ENCODE measurements at regions of chr21 and their contacts with region 1.

Region 1: GRCh38 chr21:34888569-34889319 is 160.4 kb downstream of the RUNX1 start:
- DNase-seq: no peak
- ATAC-seq: peak; percentile 68
- H3K4me3 ChIP-seq: peak overlapping the region; percentile 72
- H3K27ac ChIP-seq: peak overlapping the region; percentile 68
- H3K4me1 ChIP-seq: peaks cover 5% of the 10 kb centered on the region
- H3K27me3 ChIP-seq: peaks cover 3 to 9% of the 10 kb centered on the region in 2 experiments
- CTCF ChIP-seq: no peak
- EP300 ChIP-seq: no peak
- POLR2A ChIP-seq: peak; percentile 69
- RAD21 ChIP-seq: no peak

Region 2: DNA sequence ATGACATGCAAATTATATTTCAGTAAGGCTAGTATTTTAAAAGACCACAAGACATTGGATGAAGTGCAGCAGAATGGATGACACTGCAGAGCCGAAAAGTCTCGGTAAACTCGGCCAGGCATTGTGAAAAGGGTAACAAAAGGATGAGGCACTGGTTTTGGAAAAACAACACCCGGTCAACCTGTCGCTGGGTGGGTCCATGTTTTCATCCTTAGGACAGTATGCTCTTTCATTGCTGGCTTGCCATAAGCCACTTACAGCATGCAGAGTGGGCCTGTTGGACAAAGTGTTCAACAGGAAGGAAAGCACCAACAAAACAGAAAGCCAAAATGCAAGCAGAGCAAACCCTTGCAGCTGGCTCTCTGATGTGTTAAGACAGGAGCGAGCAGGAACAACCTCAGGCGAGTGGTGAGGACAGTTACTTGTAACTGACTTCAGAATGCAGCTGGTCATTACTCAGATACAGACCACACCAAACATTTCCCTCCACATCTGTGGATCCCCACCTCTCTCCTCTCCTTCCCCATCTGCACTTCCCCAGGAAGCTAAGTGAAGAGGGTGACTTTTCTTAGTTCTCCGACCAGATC is 270.9 kb before region 1 on chr21:
- CTCF ChIA-PET with region 1: no interaction called
- POLR2A ChIA-PET with region 1: no interaction called
- RAD21 ChIA-PET with region 1: no interaction called
- SMC1A ChIA-PET with region 1: no interaction called
- in situ Hi-C with region 1: no loop called
- intact Hi-C with region 1: no loop called
- DNase-seq: no peak
- ATAC-seq: no peak
- H3K4me3 ChIP-seq: no peak overlapping the region
- H3K27ac ChIP-seq: no peak overlapping the region
- H3K4me1 ChIP-seq: peaks cover under 1% of the 10 kb centered on the region; the same call in 1 of the 2 replicates
- H3K27me3 ChIP-seq: no peaks in the 10 kb centered on the region
- CTCF ChIP-seq: no peak
- EP300 ChIP-seq: no peak
- POLR2A ChIP-seq: no peak
- RAD21 ChIP-seq: no peak

Region 3: GRCh38 chr21:34745557-34746255 is 143.0 kb before region 1 on chr21:
- CTCF ChIA-PET with region 1: interaction called, 17 read pairs
- POLR2A ChIA-PET with region 1: no interaction called
- RAD21 ChIA-PET with region 1: interaction called, 28 read pairs
- SMC1A ChIA-PET with region 1: interaction called, 6 read pairs
- in situ Hi-C with region 1: no loop called
- intact Hi-C with region 1: loop called (anchors 2 kb)
- DNase-seq: peak; percentile 26
- ATAC-seq: peak; percentile 95
- H3K4me3 ChIP-seq: peak overlapping the region; percentile 38; the same call in 1 of the 2 replicates
- H3K27ac ChIP-seq: 0 out of 2 replicates have a peak overlapping the region, but pooled peaks have one; percentile 18
- H3K4me1 ChIP-seq: peaks cover 8% of the 10 kb centered on the region
- H3K27me3 ChIP-seq: no peaks in the 10 kb centered on the region; a peak in 2 of 4 replicates
- CTCF ChIP-seq: peak; percentile 81 to 91 (median 85)
- EP300 ChIP-seq: no peak
- POLR2A ChIP-seq: no peak
- RAD21 ChIP-seq: peak; percentile 92

Region 4: DNA sequence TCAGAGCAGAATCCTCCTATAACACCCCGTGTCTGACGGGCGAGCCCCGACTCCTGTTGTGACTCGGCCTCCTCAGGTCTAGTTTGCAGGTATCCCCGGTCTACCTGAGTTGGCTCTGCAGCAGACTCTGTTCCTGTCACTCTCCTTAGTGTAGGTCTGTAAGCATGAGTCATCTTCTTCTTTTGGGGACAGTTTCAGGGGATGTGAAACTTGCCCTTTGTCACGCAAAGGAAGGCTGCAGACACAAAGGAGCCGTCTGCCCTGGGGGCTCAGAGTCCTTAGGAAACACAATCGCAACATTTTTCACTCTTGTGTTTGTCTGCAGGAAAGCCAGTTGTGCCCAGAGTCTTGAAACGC is 22.8 kb before region 1 on chr21:
- CTCF ChIA-PET with region 1: interaction called, 3 read pairs
- POLR2A ChIA-PET with region 1: interaction called, 4 read pairs
- RAD21 ChIA-PET with region 1: interaction called, 3 read pairs
- SMC1A ChIA-PET with region 1: interaction called, 4 read pairs
- in situ Hi-C with region 1: no loop called
- intact Hi-C with region 1: loop called (anchors 1 kb)
- DNase-seq: peak; percentile 74
- ATAC-seq: peak; percentile 93
- H3K4me3 ChIP-seq: no peak overlapping the region; the same call in 1 of the 2 replicates
- H3K27ac ChIP-seq: peak overlapping the region; percentile 76
- H3K4me1 ChIP-seq: peaks cover 29% of the 10 kb centered on the region
- H3K27me3 ChIP-seq: no peaks in the 10 kb centered on the region; a peak in 1 of 4 replicates
- CTCF ChIP-seq: no peak
- EP300 ChIP-seq: peak; percentile 76 to 97; a peak in 3 of 4 replicates
- POLR2A ChIP-seq: no peak
- RAD21 ChIP-seq: no peak; the same call in 1 of the 2 replicates

Region 5: DNA sequence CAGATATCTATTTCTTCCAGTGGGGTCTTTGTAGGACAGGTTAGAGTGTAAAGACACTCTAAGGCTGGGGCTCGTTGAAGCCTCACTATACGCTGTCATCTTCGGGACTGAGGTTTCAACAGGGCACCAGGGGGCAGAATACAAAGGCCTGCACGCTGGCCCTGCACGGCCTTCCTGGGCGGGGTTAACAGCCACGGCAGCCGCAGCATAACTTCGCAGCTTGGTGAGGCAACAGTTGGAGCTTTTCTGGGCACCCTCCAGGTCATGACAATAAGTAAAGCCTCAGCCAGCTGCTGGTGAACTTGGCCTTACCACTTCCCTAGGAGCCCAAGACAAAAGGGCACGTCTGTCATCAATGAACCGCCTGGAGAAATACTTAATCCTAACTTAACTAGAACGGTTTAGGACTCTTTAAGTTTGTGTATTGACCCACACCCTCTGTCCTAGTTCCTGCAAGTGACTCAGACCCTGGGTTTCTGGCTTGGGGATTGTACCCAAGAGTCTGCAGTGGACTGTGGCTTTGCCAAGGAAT is 162.6 kb after region 1 on chr21:
- CTCF ChIA-PET with region 1: no interaction called
- POLR2A ChIA-PET with region 1: no interaction called
- RAD21 ChIA-PET with region 1: no interaction called
- SMC1A ChIA-PET with region 1: no interaction called
- in situ Hi-C with region 1: no loop called
- intact Hi-C with region 1: loop called (anchors 5 kb)
- DNase-seq: no peak
- ATAC-seq: peak; percentile 34; the same call in 2 of the 3 replicates
- H3K4me3 ChIP-seq: no peak overlapping the region
- H3K27ac ChIP-seq: peak overlapping the region; percentile 23; the same call in 1 of the 2 replicates
- H3K4me1 ChIP-seq: peaks cover 41% of the 10 kb centered on the region
- H3K27me3 ChIP-seq: peaks cover 0 to 1% of the 10 kb centered on the region in 2 experiments; a peak in 1 of 4 replicates
- CTCF ChIP-seq: peak; percentile 16 to 32 (median 31); a peak in 4 of 6 replicates
- EP300 ChIP-seq: no peak
- POLR2A ChIP-seq: no peak
- RAD21 ChIP-seq: peak; percentile 69

Region 6: DNA sequence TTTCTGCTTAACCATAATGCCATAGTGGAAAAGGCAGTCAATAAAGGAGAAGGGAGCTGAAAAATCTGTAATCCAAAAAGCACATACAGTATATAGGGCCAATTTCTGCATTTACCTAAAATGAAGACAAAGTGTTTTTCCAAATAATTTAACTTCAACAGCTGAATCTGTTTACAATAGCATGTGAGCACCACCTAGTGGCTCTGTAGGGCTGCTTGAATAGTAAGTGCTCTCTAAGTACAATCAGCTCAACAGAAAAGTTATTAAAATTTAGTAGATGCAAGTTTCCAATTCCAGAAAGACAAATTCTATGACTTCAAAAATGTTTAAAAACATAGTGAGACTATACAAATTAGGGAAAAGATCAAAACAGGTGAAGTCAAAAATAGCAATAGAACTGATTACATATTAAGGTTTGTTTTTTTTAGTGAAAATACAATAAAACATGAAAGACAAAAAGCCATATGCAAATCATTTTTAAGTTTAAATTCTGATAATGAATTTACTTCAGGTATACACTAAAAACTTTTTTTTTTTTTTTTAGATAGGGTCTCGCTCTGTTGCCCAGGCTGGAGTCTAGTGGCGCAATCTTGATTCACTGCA is 951.6 kb after region 1 on chr21:
- CTCF ChIA-PET with region 1: interaction called, 11 read pairs
- POLR2A ChIA-PET with region 1: no interaction called
- RAD21 ChIA-PET with region 1: interaction called, 15 read pairs
- SMC1A ChIA-PET with region 1: interaction called, 3 read pairs
- in situ Hi-C with region 1: no loop called
- intact Hi-C with region 1: loop called (anchors 5 kb)
- DNase-seq: no peak
- ATAC-seq: peak; percentile 76
- H3K4me3 ChIP-seq: no peak overlapping the region
- H3K27ac ChIP-seq: no peak overlapping the region
- H3K4me1 ChIP-seq: no peaks in the 10 kb centered on the region
- H3K27me3 ChIP-seq: peaks cover 0 to 1% of the 10 kb centered on the region in 2 experiments; a peak in 1 of 4 replicates
- CTCF ChIP-seq: peak; percentile 73 to 76 (median 74)
- EP300 ChIP-seq: no peak
- POLR2A ChIP-seq: no peak
- RAD21 ChIP-seq: peak; percentile 87

Measured in GM12878 (cell line).